Naive thymus-derived CD4-positive, alpha-beta T cell (primary cell): ENCODE measurements at regions of chr3 and their contacts with region 1.

Region 1: GRCh38 chr3:8416965-8417364 is 84.7 kb upstream of the LMCD1 start:
- DNase-seq: no peak
- ATAC-seq: peak; percentile 28
- H3K4me3 ChIP-seq: no peak overlapping the region
- H3K4me3 Mint-ChIP-seq: no peak overlapping the region
- H3K27ac ChIP-seq: no peak overlapping the region
- H3K27ac Mint-ChIP-seq: peak overlapping the region in 3 of 9 donors; percentile 45 to 67 (median 57)
- H3K4me1 ChIP-seq: peaks cover 0 to 7% of the 10 kb centered on the region in 2 donors
- H3K4me1 Mint-ChIP-seq: peaks cover 0 to 14% (median 8%) of the 10 kb centered on the region in 7 donors
- H3K27me3 ChIP-seq: no peaks in the 10 kb centered on the region
- H3K27me3 Mint-ChIP-seq: no peaks in the 10 kb centered on the region

Region 2: GRCh38 chr3:7800006-7800780 is 616.8 kb before region 1 on chr3:
- CTCF ChIA-PET with region 1: interaction called, 4 read pairs
- POLR2A ChIA-PET with region 1: no interaction called
- intact Hi-C with region 1: loop called in 1 of 2 experiments (anchors 1 kb)
- DNase-seq: peak in 4 of 9 donors; percentile 19 to 44 (median 30)
- ATAC-seq: no peak
- H3K4me3 ChIP-seq: no peak overlapping the region
- H3K4me3 Mint-ChIP-seq: no peak overlapping the region
- H3K27ac ChIP-seq: no peak overlapping the region
- H3K27ac Mint-ChIP-seq: no peak overlapping the region
- H3K4me1 ChIP-seq: no peaks in the 10 kb centered on the region
- H3K4me1 Mint-ChIP-seq: peaks cover 0 to 23% (median 7%) of the 10 kb centered on the region in 7 donors
- H3K27me3 ChIP-seq: no peaks in the 10 kb centered on the region
- H3K27me3 Mint-ChIP-seq: peaks cover 0 to 3% (median 0%) of the 10 kb centered on the region in 5 donors

Region 3: GRCh38 chr3:8239718-8240695 is 177.0 kb before region 1 on chr3:
- CTCF ChIA-PET with region 1: interaction called, 8 read pairs
- POLR2A ChIA-PET with region 1: no interaction called
- intact Hi-C with region 1: loop called (anchors 1 kb)
- DNase-seq: peak in 6 of 9 donors; percentile 5 to 29 (median 15)
- ATAC-seq: peak; percentile 64
- H3K4me3 ChIP-seq: no peak overlapping the region
- H3K4me3 Mint-ChIP-seq: no peak overlapping the region
- H3K27ac ChIP-seq: no peak overlapping the region
- H3K27ac Mint-ChIP-seq: no peak overlapping the region
- H3K4me1 ChIP-seq: no peaks in the 10 kb centered on the region
- H3K4me1 Mint-ChIP-seq: no peaks in the 10 kb centered on the region
- H3K27me3 ChIP-seq: no peaks in the 10 kb centered on the region
- H3K27me3 Mint-ChIP-seq: peaks cover 0 to 4% (median 0%) of the 10 kb centered on the region in 5 donors

Region 4: DNA sequence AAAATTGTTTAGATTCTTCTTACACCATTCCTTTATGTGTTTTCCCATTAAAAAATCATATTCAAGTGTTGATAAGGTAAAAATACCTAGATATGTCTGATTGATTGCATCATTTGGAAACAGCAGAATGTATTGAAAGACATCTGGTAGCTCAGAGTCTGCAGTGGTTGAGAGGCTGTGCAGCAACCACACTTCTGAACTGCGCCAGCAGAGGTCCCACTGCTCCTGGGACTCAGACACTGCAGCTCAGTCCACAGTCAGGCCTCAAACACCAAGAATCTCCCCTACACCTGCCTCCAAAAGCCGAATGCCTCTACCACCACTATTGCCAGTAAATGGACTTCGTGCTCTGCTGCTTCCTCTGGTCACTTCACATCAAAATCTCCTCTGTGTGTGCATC is 92.2 kb before region 1 on chr3:
- CTCF ChIA-PET with region 1: interaction called, 85 read pairs
- POLR2A ChIA-PET with region 1: interaction called, 8 read pairs
- intact Hi-C with region 1: loop called (anchors 1 kb)
- DNase-seq: peak; percentile 16 to 54 (median 36)
- ATAC-seq: peak; percentile 88
- H3K4me3 ChIP-seq: no peak overlapping the region
- H3K4me3 Mint-ChIP-seq: no peak overlapping the region
- H3K27ac ChIP-seq: no peak overlapping the region
- H3K27ac Mint-ChIP-seq: peak overlapping the region in 3 of 9 donors; percentile 1 to 22 (median 13)
- H3K4me1 ChIP-seq: peaks cover 0 to 5% of the 10 kb centered on the region in 2 donors
- H3K4me1 Mint-ChIP-seq: peaks cover 0 to 26% (median 15%) of the 10 kb centered on the region in 7 donors
- H3K27me3 ChIP-seq: no peaks in the 10 kb centered on the region
- H3K27me3 Mint-ChIP-seq: peaks cover 0 to 5% (median 0%) of the 10 kb centered on the region in 5 donors

Region 5: GRCh38 chr3:8403996-8404395 is 13.0 kb before region 1 on chr3:
- CTCF ChIA-PET with region 1: interaction called, 13 read pairs
- POLR2A ChIA-PET with region 1: no interaction called
- intact Hi-C with region 1: no loop called
- DNase-seq: no peak
- ATAC-seq: no peak
- H3K4me3 ChIP-seq: no peak overlapping the region
- H3K4me3 Mint-ChIP-seq: no peak overlapping the region
- H3K27ac ChIP-seq: no peak overlapping the region
- H3K27ac Mint-ChIP-seq: no peak overlapping the region
- H3K4me1 ChIP-seq: no peaks in the 10 kb centered on the region
- H3K4me1 Mint-ChIP-seq: no peaks in the 10 kb centered on the region
- H3K27me3 ChIP-seq: no peaks in the 10 kb centered on the region
- H3K27me3 Mint-ChIP-seq: peaks cover 0 to 5% (median 5%) of the 10 kb centered on the region in 5 donors

Region 6: DNA sequence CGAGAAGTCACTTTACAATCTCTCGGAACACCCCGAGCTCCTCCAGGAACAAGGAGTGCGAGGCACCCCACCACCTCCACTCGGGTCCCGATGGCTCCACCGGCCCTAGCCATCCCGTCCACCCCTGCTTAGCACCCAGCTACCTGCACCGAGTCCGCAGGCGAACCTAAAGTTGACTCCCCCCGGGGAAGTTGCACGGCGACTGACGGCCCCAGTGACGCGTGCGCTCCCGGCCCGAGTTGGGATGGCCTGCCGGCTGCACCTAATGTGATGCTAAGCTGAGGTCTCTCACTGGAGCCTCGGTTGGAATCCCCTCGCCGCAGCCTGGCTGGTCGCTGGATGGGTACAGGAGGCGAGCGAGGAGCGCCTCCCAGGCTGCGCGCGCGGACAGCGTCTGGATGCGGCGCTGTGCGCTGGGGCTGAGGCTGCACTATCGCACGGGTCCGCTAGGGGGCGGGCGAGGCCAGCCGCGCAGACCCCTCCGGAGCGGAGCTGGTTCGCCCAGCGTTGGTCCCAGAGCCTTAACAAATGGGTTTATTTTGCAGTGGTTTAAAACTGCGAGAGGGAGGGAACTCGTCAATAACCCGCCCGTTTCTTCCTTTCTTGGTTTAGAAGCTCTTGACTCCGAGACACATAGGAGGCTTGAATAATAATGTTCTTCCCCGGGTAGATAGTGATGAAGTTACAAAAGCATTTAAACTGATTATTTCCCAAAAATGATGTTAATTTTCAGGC is 352.3 kb after region 1 on chr3 and contains the start of gene OXTR:
- CTCF ChIA-PET with region 1: no interaction called
- POLR2A ChIA-PET with region 1: no interaction called
- intact Hi-C with region 1: no loop called
- DNase-seq: peak in 7 of 9 donors; percentile 14 to 76 (median 37)
- ATAC-seq: peak; percentile 78
- H3K4me3 ChIP-seq: no peak within 1 kb of the TSS
- H3K4me3 Mint-ChIP-seq: peak within 1 kb of the TSS in 9 of 10 donors; percentile 19 to 71 (median 60)
- H3K27ac ChIP-seq: no peak within 1 kb of the TSS
- H3K27ac Mint-ChIP-seq: peak within 1 kb of the TSS in 1 of 9 donors; percentile 19
- H3K4me1 ChIP-seq: peaks cover 0 to 6% of the 10 kb centered on the region in 2 donors
- H3K4me1 Mint-ChIP-seq: peaks cover 9 to 19% (median 15%) of the 10 kb centered on the region in 7 donors
- H3K27me3 ChIP-seq: peaks cover 0 to 8% of the 10 kb centered on the region in 2 donors
- H3K27me3 Mint-ChIP-seq: peaks cover 27 to 47% (median 30%) of the 10 kb centered on the region in 5 donors
- total RNA-seq, gene OXTR: 0.05 to 1.3 (median 0.22) TPM